Ascending aorta (tissue), 2 donors: ENCODE measurements at regions of chr12 and their contacts with region 1.

Region 1: GRCh38 chr12:26113853-26114719 is 10.8 kb downstream of the BHLHE41 start:
- DNase-seq: peak; percentile 81 to 97
- H3K4me3 ChIP-seq: peak overlapping the region; percentile 57
- H3K27ac ChIP-seq: peak overlapping the region; percentile 89 to 92
- H3K4me1 ChIP-seq: peaks cover 0 to 17% of the 10 kb centered on the region in 2 donors
- H3K27me3 ChIP-seq: no peaks in the 10 kb centered on the region
- CTCF ChIP-seq: peak; percentile 24 to 38 (median 26)

Region 2: DNA sequence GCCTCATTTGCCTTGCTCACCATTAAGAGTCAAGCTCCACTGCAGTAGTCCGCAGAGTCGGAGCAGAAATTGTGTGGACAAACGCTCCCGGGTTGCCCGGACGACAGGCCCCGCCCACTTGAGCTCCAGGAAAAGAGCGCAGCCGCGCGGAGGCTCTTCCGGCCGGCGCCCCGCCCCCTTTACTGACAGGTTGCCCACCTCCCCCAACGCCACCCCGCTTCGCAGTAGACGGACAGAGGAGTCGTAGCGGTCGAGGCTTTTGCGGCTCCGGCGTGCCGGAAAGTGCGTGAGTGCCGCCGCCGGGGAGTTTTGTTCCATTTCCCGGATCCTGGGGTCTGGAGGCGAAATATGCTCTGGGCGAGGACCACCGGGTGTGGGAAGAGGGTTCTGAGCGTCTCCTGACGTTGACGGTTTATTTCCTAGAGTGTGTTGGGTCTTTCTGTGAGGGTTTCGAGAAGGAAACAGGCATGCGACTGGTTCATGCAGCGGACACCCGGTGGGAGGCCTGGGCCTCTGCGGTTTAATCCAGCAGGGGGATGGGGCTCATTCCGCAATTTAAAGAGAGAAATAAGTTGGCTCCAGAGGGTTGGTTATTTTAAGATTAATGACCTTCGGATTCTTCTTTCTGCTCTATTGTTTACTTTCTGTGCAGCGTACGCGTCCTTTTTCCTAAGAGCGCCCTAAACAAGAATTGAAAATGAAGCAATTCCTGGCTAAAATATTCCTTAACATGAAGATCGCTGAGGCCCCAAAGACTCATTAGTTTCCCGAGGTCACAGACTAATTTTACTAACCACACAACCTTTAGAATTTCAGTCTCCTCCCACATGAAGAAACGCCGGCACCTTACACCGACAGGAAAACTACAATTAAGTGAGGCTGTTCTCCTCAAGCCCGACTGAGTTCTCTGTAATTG is 918.8 kb before region 1 on chr12 and contains the starts of genes DNAI7 and ETFRF1:
- intact Hi-C with region 1: loop called (anchors 10 kb)
- DNase-seq: peak; percentile 90 to 99
- H3K4me3 ChIP-seq: peak within 1 kb of the TSS; percentile 84 to 85
- H3K27ac ChIP-seq: peak within 1 kb of the TSS; percentile 97
- H3K4me1 ChIP-seq: peaks cover 3 to 9% of the 10 kb centered on the region in 2 donors
- H3K27me3 ChIP-seq: no peaks in the 10 kb centered on the region
- CTCF ChIP-seq: peak in 1 of 3 experiments; percentile 9
- total RNA-seq, gene DNAI7: not detected
- total RNA-seq, gene ETFRF1: 0.85 TPM

Region 3: GRCh38 chr12:26011099-26011498 is 103.0 kb before region 1 on chr12:
- intact Hi-C with region 1: loop called (anchors 5 kb)
- DNase-seq: no peak
- H3K4me3 ChIP-seq: no peak overlapping the region
- H3K27ac ChIP-seq: peak overlapping the region; percentile 82 to 87
- H3K4me1 ChIP-seq: peaks cover 3 to 24% of the 10 kb centered on the region in 2 donors
- H3K27me3 ChIP-seq: no peaks in the 10 kb centered on the region
- CTCF ChIP-seq: no peak

Region 4: DNA sequence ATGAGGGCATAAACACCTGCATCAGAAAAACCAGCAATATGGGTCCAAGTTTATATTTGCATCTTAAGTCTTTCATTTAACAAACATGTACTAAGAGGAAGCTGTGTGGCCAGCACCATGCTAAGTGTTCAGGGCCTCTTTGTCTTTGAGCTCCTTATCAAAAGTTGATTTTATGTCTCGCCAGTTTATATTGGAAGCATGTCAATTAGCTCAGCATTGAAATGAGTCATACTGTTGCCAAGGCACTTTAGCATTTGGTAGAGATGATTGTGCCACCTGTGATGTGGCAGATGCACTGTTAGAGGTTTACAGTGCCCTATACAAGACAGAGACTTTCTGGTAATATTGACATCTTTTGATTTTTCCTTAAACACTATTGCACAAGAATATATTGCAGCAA is 57.8 kb before region 1 on chr12:
- intact Hi-C with region 1: no loop called
- DNase-seq: no peak
- H3K4me3 ChIP-seq: no peak overlapping the region
- H3K27ac ChIP-seq: no peak overlapping the region
- H3K4me1 ChIP-seq: peaks cover 0 to 14% of the 10 kb centered on the region in 2 donors
- H3K27me3 ChIP-seq: no peaks in the 10 kb centered on the region
- CTCF ChIP-seq: no peak

Region 5: DNA sequence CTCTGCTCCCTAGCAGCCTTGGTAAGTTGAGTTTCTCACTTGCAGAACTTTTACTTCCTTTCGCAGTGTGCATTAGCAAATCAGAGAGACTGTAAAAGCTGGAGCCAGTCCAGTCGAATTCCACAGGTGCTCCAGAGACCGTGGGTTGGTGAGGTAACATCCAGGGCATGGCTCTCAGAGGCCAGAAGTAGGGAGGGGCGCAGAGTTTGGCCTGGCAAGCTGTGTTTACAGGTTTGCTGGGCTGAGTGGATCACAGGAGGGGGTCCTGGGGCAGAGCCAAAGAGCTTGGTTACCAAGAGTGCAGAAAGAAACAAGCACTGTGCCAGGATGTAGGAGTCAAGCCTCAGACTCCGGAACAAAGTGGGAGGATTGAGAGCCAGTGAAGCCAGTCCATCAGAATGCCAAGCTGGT is 20.9 kb after region 1 on chr12:
- intact Hi-C with region 1: no loop called
- DNase-seq: peak in 1 of 2 donors; percentile 78
- H3K4me3 ChIP-seq: no peak overlapping the region
- H3K27ac ChIP-seq: peak overlapping the region in 1 of 2 donors; percentile 47
- H3K4me1 ChIP-seq: peaks cover 0 to 3% of the 10 kb centered on the region in 2 donors
- H3K27me3 ChIP-seq: no peaks in the 10 kb centered on the region
- CTCF ChIP-seq: no peak

Region 6: DNA sequence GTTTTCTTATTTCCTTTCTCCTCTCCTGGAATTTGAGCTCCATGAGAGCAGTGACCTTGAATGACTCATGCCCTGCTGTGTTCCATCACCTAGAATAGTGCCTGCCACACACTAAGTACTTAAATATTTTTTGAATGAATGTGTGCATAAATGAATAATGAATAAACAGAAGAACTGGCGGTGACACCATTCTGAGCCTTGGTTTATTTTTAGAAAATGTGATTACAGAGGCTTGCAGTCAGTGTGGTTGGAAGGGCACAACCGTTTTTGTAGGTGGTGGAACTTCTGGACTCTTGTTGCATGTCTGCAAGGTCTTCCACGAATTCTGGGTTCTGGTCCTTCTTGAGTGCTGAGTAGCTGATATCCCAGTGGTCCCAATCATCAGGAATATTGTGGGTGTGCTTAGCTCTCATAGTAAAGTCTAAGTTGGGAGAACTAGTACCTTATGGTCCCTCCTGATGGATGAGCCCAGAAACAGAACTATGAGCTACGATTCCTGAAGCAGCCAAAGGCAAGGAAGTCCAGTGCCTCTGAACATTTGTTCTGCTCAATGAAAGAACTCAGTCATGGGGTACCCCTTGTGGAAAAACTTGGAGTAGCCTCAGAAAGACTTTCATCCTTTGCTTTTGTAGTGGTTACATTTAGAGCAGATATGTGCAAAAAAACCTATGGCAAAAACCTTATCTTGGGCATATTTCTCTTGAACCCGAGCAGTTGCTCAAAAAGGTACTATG is 39.5 kb after region 1 on chr12:
- intact Hi-C with region 1: loop called (anchors 5 kb)
- DNase-seq: peak in 1 of 2 donors; percentile 74
- H3K4me3 ChIP-seq: no peak overlapping the region
- H3K27ac ChIP-seq: peak overlapping the region; percentile 75 to 78
- H3K4me1 ChIP-seq: peaks cover 3 to 36% of the 10 kb centered on the region in 2 donors
- H3K27me3 ChIP-seq: no peaks in the 10 kb centered on the region
- CTCF ChIP-seq: peak; percentile 6 to 38 (median 28)

Region 7: DNA sequence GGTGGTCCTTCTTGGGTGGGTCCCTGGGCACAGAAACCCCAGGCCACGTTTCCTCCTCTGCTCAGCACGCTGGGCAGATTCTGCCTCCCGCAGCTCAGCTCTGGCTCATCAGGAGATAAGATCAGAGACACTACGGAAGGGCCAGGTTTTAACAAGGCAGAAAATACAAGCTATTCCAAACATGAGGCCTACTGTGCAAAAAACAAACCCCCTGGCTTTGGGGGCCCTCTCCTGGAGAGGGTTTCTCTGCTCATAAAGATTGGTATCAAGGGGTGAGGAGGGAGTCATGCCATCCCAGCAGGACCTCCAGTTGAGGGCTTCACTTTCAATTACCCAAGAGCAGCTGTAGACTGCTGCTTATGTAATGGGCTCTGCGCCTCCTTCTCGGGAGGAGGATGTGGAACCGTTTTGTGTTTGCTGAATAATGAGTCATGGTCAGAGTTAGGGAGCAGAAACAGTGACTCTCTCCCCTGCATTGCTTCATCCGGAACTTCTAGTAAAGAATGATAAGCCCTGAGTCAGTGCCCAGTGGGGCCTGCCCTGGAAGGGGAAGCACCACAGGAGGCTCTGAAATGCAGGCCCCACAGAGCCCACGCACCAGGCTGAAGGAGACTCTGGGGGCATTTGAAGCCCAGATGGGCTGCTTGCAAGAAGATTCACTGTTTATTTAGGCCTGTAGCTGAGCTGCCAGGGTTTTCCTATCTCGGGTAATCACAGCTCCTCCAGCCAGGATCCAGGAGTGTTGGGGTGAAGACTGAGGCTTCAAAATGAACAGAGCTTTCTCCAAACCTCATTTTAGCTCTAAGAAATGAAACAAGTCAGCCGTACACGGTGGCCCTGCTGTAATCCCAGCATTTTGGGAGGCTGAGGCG is 160.6 kb after region 1 on chr12:
- intact Hi-C with region 1: loop called (anchors 1 kb)
- DNase-seq: peak; percentile 78 to 96
- H3K4me3 ChIP-seq: no peak overlapping the region
- H3K27ac ChIP-seq: peak overlapping the region; percentile 80 to 84
- H3K4me1 ChIP-seq: peaks cover 6 to 30% of the 10 kb centered on the region in 2 donors
- H3K27me3 ChIP-seq: no peaks in the 10 kb centered on the region
- CTCF ChIP-seq: no peak

Region 8: GRCh38 chr12:26937875-26938700 is 824.0 kb after region 1 on chr12 and contains the starts of genes FGFR1OP2 and INTS13:
- intact Hi-C with region 1: loop called (anchors 10 kb)
- DNase-seq: peak; percentile 97 to 99
- H3K4me3 ChIP-seq: peak within 1 kb of the TSS; percentile 84 to 96
- H3K27ac ChIP-seq: peak within 1 kb of the TSS; percentile 88 to 99
- H3K4me1 ChIP-seq: peaks cover 4 to 37% of the 10 kb centered on the region in 2 donors
- H3K27me3 ChIP-seq: no peaks in the 10 kb centered on the region
- CTCF ChIP-seq: no peak
- total RNA-seq, gene FGFR1OP2: 34.3 TPM
- total RNA-seq, gene INTS13: 47.5 TPM